Gastrocnemius medialis (tissue), 4 donors: ENCODE measurements at regions of chrX and their contacts with region 1.

Region 1: GRCh38 chrX:54639346-54640102 is 109.5 kb downstream of the GNL3L start:
- DNase-seq: peak; percentile 92 to 95
- ATAC-seq: peak; percentile 73 to 79
- H3K4me3 ChIP-seq: peak overlapping the region; percentile 53 to 63 (median 60)
- H3K27ac ChIP-seq: peak overlapping the region; percentile 85 to 92 (median 90)
- H3K4me1 ChIP-seq: peaks cover 13 to 20% of the 10 kb centered on the region in 2 donors
- H3K27me3 ChIP-seq: no peaks in the 10 kb centered on the region
- CTCF ChIP-seq: peak in 4 of 5 experiments; percentile 71 to 82 (median 76)
- POLR2A ChIP-seq: peak; percentile 62 to 81

Region 2: DNA sequence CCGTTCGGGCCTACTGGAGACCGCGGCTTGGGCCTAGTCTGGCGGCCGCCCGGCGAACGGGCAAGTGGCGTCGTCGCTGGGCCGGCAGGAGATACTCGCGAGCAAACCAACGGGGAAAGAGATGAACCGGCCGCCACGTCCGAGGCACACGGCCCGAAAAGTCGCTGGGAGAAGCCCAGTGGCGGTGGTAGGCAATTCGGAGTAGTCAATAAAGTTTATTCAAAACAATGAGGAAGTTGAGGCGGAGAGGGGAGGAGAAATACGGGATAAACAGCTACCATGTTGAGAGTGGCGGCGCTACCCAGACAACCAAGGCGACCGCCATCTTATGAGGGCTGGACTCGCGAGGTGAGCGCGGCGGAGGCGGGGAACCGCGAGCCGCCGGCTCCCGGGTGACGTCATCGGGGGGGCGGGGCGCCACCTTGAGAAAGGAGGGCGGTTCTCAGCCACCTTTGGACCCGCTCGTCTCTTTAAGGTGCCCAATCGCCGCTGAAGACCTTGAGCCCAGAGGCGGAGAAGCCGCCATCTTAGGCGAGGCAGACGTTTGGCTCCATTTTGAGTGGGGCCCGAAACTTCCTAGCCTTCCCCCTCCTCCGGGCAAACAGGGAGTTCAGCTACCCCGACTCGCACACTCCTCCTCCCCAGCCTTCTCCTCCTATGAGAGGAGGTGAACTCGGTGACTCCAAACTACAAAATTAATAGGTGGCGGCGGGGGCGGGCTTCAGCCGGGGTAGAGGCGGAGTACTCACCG is 595.2 kb before region 1 on chrX and contains the start of gene PHF8:
- in situ Hi-C with region 1: no loop called
- intact Hi-C with region 1: loop called (anchors 10 kb)
- DNase-seq: peak; percentile 87 to 95
- ATAC-seq: peak; percentile 91 to 95
- H3K4me3 ChIP-seq: peak within 1 kb of the TSS; percentile 70 to 96 (median 78)
- H3K27ac ChIP-seq: peak within 1 kb of the TSS; percentile 90 to 96 (median 94)
- H3K4me1 ChIP-seq: no peaks in the 10 kb centered on the region
- H3K27me3 ChIP-seq: no peaks in the 10 kb centered on the region
- CTCF ChIP-seq: no peak
- POLR2A ChIP-seq: peak; percentile 60 to 67
- total RNA-seq, gene PHF8: 7.2 to 22.5 (median 13.9) TPM

Region 3: GRCh38 chrX:54529552-54530357 is 109.8 kb before region 1 on chrX and contains the start of gene GNL3L:
- in situ Hi-C with region 1: no loop called
- intact Hi-C with region 1: loop called (anchors 2 kb)
- DNase-seq: peak; percentile 78 to 87
- ATAC-seq: peak; percentile 91 to 92
- H3K4me3 ChIP-seq: peak within 1 kb of the TSS; percentile 64 to 84 (median 76)
- H3K27ac ChIP-seq: peak within 1 kb of the TSS; percentile 80 to 91 (median 84)
- H3K4me1 ChIP-seq: peaks cover 4 to 12% of the 10 kb centered on the region in 2 donors
- H3K27me3 ChIP-seq: no peaks in the 10 kb centered on the region
- CTCF ChIP-seq: no peak
- POLR2A ChIP-seq: peak; percentile 38 to 50
- total RNA-seq, gene GNL3L: 21.2 to 41.7 (median 34.9) TPM

Region 4: GRCh38 chrX:54747733-54748393 is 108.3 kb after region 1 on chrX:
- in situ Hi-C with region 1: no loop called
- intact Hi-C with region 1: loop called (anchors 1 kb)
- DNase-seq: no peak
- ATAC-seq: no peak
- H3K4me3 ChIP-seq: peak overlapping the region; percentile 52 to 58 (median 57)
- H3K27ac ChIP-seq: peak overlapping the region; percentile 75 to 88 (median 86)
- H3K4me1 ChIP-seq: peaks cover 2 to 3% of the 10 kb centered on the region in 2 donors
- H3K27me3 ChIP-seq: no peaks in the 10 kb centered on the region
- CTCF ChIP-seq: no peak
- POLR2A ChIP-seq: no peak

Region 5: GRCh38 chrX:54808605-54809483 is 169.3 kb after region 1 on chrX:
- in situ Hi-C with region 1: loop called in 2 of 4 experiments (anchors 10 kb)
- intact Hi-C with region 1: loop called (anchors 1 kb)
- DNase-seq: peak; percentile 86 to 91
- ATAC-seq: peak; percentile 91 to 95
- H3K4me3 ChIP-seq: peak overlapping the region; percentile 71 to 94 (median 81)
- H3K27ac ChIP-seq: peak overlapping the region; percentile 87 to 90 (median 89)
- H3K4me1 ChIP-seq: peaks cover 0 to 6% of the 10 kb centered on the region in 2 donors
- H3K27me3 ChIP-seq: no peaks in the 10 kb centered on the region
- CTCF ChIP-seq: no peak
- POLR2A ChIP-seq: no peak

Region 6: DNA sequence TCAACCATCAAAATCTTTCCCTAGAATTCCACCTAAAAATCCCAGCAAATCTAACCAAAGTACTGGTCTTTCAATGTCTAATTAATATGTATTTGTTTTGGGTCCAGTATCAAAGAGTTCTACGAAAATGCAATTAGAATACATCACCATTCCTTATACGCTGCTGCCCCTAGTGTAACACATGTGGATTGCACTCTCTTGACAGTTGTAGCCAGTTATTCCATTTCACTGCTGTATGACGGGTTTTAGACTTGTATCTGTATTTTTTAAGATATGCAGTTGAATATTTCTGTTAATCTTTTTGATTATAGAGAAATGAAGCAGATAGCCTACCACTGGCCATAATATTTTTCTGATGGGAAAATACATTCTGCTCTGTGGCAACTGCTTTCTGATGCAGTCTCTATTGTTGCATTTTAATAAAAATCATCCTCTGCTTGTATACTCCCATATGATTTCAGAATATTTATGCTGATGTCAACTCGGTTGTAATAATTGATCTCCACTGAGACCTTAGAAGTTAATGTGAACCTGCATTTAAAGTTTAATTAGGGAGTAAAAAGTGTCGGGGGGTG is 418.2 kb after region 1 on chrX:
- in situ Hi-C with region 1: no loop called
- intact Hi-C with region 1: loop called (anchors 1 kb)
- DNase-seq: no peak
- ATAC-seq: peak in 1 of 2 donors; percentile 69
- H3K4me3 ChIP-seq: peak overlapping the region in 1 of 4 donors; percentile 32
- H3K27ac ChIP-seq: no peak overlapping the region
- H3K4me1 ChIP-seq: no peaks in the 10 kb centered on the region
- H3K27me3 ChIP-seq: peaks cover 0 to 5% (median 0%) of the 10 kb centered on the region in 3 donors
- CTCF ChIP-seq: peak; percentile 62 to 78 (median 68)
- POLR2A ChIP-seq: no peak

Region 7: DNA sequence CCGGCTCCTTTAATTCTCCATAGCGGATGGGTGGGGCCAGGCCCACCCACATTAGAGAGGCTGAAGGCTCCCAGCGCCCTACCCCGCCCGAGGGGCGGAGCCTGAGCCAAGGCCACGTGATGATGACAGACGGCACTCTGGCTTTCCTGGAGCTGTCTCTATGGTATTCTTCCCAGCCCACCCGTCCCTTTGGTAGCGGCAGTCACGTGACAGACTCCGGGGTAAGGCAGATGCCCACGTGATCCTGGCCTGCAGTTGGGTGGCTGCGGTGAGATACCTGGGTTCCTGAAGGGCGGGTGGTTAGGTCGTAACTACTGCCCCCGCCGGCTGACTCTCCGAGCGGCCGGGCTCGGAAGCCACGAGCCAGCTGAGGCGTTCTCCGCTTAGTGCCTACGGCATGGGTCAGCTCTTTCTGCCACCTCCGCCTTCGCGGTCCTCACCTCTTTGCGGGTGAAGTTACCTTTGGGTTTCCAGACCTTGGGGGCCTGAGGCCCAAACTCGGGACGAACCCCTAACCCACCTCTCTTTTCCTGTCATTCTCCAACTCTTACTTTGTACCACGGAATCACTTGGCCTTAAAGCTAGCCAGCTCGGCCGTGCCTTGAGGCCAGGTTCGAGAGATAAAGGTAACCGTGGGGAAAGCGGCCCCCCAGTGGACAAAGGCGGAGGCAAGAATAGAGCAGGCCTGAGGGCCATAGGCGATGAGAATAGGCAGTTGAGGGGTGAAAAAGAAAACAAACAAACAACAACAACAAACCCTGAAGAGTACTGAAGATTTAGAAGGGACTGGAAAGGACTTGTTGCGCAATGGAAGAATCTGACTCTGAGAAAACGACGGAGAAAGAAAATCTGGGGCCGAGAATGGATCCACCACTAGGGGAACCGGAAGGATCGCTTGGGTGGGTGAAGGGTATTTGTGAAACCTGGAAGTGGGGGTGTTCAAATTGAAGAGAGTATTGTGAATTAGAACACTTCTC is 1078.3 kb after region 1 on chrX and contains the start of gene RRAGB:
- in situ Hi-C with region 1: loop called in 1 of 4 experiments (anchors 25 kb)
- intact Hi-C with region 1: no loop called
- DNase-seq: peak; percentile 90 to 96
- ATAC-seq: peak; percentile 96 to 97
- H3K4me3 ChIP-seq: peak within 1 kb of the TSS; percentile 66 to 77 (median 74)
- H3K27ac ChIP-seq: peak within 1 kb of the TSS; percentile 83 to 93 (median 90)
- H3K4me1 ChIP-seq: peaks cover 5 to 12% of the 10 kb centered on the region in 2 donors
- H3K27me3 ChIP-seq: no peaks in the 10 kb centered on the region
- CTCF ChIP-seq: peak; percentile 54 to 67 (median 56)
- POLR2A ChIP-seq: peak; percentile 36 to 49
- total RNA-seq, gene RRAGB: 2.8 to 20.9 (median 7.4) TPM